ENCODE measurements at regions of chr5 and their contacts with region 1.

Region 1: DNA sequence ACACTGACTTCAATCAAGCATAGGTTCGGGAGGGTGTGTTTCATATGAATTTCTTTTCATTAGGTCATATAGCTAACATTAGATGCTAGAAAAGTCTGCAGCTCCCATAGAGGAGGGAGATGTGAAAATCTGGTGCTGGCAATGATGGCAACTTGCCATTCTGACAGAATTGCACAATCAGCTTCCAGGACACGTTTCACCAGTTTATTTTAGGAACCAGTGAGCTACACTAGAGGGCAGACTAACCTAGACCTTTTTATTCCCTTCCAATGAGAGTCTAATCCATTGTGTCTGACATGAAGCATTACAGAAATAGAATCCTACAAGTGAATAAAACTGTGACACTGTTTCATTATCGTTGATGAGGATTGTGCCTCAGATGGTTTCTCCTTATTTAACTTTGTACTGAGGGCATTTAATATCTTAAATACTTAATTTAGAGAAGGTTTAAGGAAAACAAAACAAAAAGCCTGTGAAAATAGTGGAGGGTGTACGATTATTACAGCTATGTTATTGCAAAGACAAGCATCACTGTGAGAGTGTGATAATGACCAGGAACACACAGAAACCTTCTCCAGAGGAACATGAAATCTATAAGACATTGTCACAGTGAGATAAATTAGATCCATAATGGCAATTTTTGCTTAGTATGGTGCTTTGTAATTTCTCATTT is 363.3 kb upstream of the RPS23 start:
- DNase-seq: peak; percentile 34
- H3K4me3 Mint-ChIP-seq: no peak overlapping the region
- H3K27ac Mint-ChIP-seq: no peak overlapping the region
- H3K4me1 Mint-ChIP-seq: no peaks in the 10 kb centered on the region
- H3K27me3 Mint-ChIP-seq: no peaks in the 10 kb centered on the region

Region 2: DNA sequence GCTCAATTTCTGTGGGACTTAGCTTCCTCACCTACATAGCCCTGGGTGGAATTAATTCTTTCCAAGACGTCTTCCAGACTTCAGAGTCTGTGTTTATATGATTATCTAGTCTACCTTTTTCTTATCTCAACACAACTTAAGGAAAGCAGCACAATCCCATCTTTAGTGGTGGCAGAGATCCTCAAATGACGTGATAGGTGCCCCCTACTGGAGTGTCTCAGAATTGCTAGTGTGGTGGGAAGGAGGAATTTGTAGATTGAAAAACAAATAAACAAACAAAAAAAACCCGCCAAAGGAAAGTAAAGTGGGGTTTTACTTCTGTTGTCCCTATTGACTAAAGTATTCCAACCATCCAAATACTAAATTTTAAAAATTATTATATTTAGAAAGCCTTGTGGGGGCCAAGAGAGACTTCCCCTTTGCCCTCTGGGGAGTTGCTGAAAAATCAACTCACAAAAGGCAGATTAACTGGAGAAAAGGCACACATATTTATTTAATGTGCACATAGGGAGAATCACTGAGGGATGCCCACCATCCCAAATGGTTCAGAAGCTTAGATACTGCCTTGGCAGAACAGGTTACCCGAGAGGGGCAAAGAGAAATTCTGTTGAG is 152.4 kb after region 1 on chr5:
- CTCF ChIA-PET with region 1: interaction called, 6 read pairs
- intact Hi-C with region 1: loop called (anchors 1 kb)
- DNase-seq: peak; percentile 57
- H3K4me3 Mint-ChIP-seq: no peak overlapping the region
- H3K27ac Mint-ChIP-seq: no peak overlapping the region
- H3K4me1 Mint-ChIP-seq: no peaks in the 10 kb centered on the region
- H3K27me3 Mint-ChIP-seq: no peaks in the 10 kb centered on the region

Region 3: DNA sequence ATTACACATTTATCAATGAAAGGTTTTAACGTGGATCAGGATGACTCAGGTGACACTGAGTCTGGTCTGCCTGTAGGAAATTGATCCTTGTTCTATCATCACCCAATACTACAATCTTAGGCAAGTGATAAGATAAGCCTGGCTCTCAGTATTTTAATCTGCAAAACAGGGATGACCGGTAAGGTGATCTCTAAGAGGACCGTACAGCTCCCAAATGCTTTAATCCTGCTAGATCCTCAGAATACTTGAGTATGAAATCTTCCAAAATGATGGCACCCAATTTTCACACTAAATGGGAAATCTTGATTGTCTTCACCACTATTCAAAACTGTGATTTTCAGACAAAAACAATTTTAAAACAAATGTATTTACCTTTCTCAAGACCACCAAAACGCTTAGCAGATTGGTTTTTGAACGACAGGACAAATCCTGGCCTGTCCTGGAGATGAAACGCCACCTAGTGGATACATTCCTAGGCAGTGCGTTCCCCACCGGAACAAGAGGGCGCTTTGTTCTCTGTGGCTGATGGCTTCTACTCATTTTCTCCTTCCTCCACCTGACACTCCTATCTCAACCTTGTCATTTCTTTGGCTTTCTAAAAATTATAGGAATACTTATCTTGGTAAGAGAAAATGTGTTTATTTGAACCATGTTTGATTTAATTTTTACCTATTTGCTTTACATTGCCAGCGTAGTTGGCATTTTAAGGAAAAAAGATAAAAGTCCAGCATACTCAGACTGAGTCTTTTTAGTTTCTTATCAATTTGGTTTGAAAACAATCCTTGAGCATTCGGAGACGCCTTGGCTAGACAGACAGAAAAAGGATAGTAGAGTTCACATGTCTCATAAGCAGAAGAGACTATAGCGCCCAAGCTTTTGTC is 788.9 kb after region 1 on chr5:
- CTCF ChIA-PET with region 1: interaction called, 7 read pairs
- intact Hi-C with region 1: loop called (anchors 1 kb)
- DNase-seq: peak; percentile 76
- H3K4me3 Mint-ChIP-seq: no peak overlapping the region
- H3K27ac Mint-ChIP-seq: no peak overlapping the region
- H3K4me1 Mint-ChIP-seq: no peaks in the 10 kb centered on the region
- H3K27me3 Mint-ChIP-seq: no peaks in the 10 kb centered on the region

Measured in activated naive CD4-positive, alpha-beta T cell treated with anti-CD3 and anti-CD28 coated beads for 36 hours (primary cell).